Dorsolateral prefrontal cortex (tissue), 120 donors: ENCODE measurements at regions of chr11 and their contacts with region 1.

Region 1: GRCh38 chr11:67353317-67354074 is at the start of gene POLD4:
- DNase-seq: peak; percentile 98 to 99 (median 98)
- H3K4me3 ChIP-seq: peak within 1 kb of the TSS; percentile 69 to 98 (median 86)
- H3K27ac ChIP-seq: peak within 1 kb of the TSS; percentile 85 to 100 (median 97)
- H3K27me3 ChIP-seq: no peaks in the 10 kb centered on the region
- CTCF ChIP-seq: peak in 21 of 56 donors; percentile 3 to 46 (median 18)
- total RNA-seq, gene POLD4: 11.4 to 49.5 (median 26.7) TPM

Region 2: GRCh38 chr11:66842896-66843775 is 510.4 kb before region 1 on chr11 and contains the start of gene RCE1:
- intact Hi-C with region 1: no loop called
- DNase-seq: peak; percentile 82 to 95 (median 86)
- H3K4me3 ChIP-seq: peak within 1 kb of the TSS; percentile 72 to 100 (median 99)
- H3K27ac ChIP-seq: peak within 1 kb of the TSS; percentile 72 to 99 (median 94)
- H3K27me3 ChIP-seq: no peaks in the 10 kb centered on the region
- CTCF ChIP-seq: peak in 21 of 56 donors; percentile 7 to 54 (median 25)
- total RNA-seq, gene RCE1: 9.8 to 28.2 (median 16.6) TPM

Region 3: GRCh38 chr11:67382276-67383136 is 29.0 kb after region 1 on chr11:
- intact Hi-C with region 1: loop called (anchors 2 kb)
- DNase-seq: peak; percentile 73 to 89 (median 81)
- H3K4me3 ChIP-seq: no peak overlapping the region
- H3K27ac ChIP-seq: peak overlapping the region in 1 of 59 donors; percentile 4
- H3K27me3 ChIP-seq: no peaks in the 10 kb centered on the region
- CTCF ChIP-seq: peak; percentile 64 to 99 (median 96)